H1 (cell line): ENCODE measurements at regions of chr10 and their contacts with region 1.

Region 1: GRCh38 chr10:63720072-63720537 is 198.9 kb downstream of the REEP3 start:
- DNase-seq: peak in 1 of 2 experiments; percentile 71
- H3K4me3 ChIP-seq: no peak overlapping the region
- H3K27ac ChIP-seq: no peak overlapping the region
- H3K4me1 ChIP-seq: peaks cover 0 to 11% (median 3%) of the 10 kb centered on the region in 4 experiments; a peak in 3 of 7 replicates
- H3K27me3 ChIP-seq: no peaks in the 10 kb centered on the region
- CTCF ChIP-seq: peak in 2 of 3 experiments; percentile 76 to 84; a peak in 3 of 4 replicates
- EP300 ChIP-seq: no peak
- POLR2A ChIP-seq: no peak
- RAD21 ChIP-seq: peak; percentile 92 to 95

Region 2: DNA sequence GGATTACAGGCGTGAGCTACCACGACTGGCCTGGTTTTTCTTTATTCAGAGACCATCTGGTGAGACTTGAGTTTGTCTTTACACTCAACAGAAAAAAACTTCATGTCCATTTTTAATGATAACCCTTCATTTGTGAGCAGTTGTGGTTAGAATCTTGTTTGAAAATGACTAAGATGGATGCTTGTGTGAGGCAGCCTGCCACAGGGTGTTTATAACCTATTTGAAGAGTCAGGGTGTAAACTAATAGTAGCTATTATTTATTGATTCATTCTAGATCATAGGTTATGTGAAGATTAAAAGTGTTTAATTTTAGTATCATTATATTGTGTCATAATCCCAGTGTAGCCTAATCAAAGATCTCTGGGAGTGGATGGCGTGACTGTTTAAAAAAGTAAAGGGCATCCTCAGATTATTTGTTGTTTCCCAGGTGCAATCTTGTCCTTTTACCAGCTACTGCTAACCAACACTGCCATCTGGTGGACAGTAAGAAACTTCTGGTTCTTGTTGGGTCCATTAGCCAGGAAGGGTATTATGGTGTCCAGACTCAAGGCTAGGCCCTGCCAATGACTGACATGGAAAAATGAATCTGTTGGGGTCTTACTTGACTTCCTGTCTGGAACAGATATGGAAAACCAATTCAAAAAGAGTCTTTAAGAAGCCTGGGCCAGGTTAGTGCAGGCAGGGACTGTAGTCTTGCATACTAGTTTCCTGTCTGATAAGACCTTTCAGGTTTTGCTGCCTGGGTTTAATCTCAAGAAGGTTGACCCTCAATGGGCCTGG is 562.1 kb before region 1 on chr10:
- CTCF ChIA-PET with region 1: interaction called, 32 read pairs
- POLR2A ChIA-PET with region 1: no interaction called
- DNase-seq: peak in 1 of 2 experiments; percentile 57
- H3K4me3 ChIP-seq: no peak overlapping the region
- H3K27ac ChIP-seq: no peak overlapping the region
- H3K4me1 ChIP-seq: peaks cover 0 to 4% (median 0%) of the 10 kb centered on the region in 4 experiments; a peak in 1 of 7 replicates
- H3K27me3 ChIP-seq: no peaks in the 10 kb centered on the region
- CTCF ChIP-seq: peak in 2 of 3 experiments; percentile 76 to 82; a peak in 3 of 4 replicates
- EP300 ChIP-seq: no peak
- POLR2A ChIP-seq: no peak
- RAD21 ChIP-seq: peak; percentile 96 to 97

Region 3: DNA sequence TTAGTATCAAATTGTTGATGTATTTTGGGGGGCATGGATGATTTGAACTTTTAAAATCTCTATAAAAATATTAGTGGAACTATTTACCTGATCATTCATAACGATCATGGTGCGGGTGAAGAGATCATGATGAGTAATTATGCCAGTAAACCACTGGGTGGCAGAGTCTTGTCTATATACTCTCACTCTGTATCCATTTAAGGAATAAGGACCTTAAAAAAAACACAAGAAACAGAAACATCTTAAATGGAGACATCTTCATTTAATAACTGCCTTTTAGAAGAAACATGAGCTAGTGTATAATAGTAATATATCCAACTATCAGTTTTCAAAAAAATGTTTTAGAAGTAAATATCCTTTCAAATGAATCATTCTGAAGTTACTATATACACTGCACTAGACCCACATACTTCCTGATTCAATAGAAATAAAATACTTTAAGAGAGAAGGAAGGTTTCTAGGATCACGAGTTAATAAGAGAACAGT is 502.9 kb before region 1 on chr10:
- CTCF ChIA-PET with region 1: interaction called, 22 read pairs
- POLR2A ChIA-PET with region 1: no interaction called
- DNase-seq: no peak
- H3K4me3 ChIP-seq: no peak overlapping the region
- H3K27ac ChIP-seq: no peak overlapping the region
- H3K4me1 ChIP-seq: peaks cover 0 to 6% (median 0%) of the 10 kb centered on the region in 4 experiments; a peak in 1 of 7 replicates
- H3K27me3 ChIP-seq: no peaks in the 10 kb centered on the region
- CTCF ChIP-seq: peak in 2 of 3 experiments; percentile 26 to 36; a peak in 2 of 4 replicates
- EP300 ChIP-seq: no peak
- POLR2A ChIP-seq: no peak
- RAD21 ChIP-seq: peak; percentile 54 to 63

Region 4: DNA sequence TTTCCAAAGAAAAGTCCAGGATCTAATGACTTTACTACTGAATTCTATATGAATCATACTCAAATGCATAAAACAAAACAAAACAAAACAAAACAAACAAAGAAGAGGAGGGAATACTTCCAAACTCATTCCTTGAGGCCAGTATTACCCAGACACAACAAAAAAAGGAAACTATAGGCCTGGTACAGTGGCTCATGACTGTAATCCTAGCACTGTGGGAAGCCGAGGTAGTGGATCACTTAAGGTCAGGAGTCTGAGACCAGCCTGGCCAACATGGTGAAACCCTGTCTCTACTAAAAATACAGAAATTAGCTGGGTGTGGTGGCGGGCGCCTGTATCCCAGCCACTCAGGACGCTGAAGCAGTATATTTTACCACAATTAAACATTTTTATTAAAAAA is 472.3 kb before region 1 on chr10:
- CTCF ChIA-PET with region 1: no interaction called
- POLR2A ChIA-PET with region 1: no interaction called
- DNase-seq: no peak
- H3K4me3 ChIP-seq: no peak overlapping the region
- H3K27ac ChIP-seq: no peak overlapping the region
- H3K4me1 ChIP-seq: peaks cover 0 to 5% (median 4%) of the 10 kb centered on the region in 4 experiments; a peak in 5 of 7 replicates
- H3K27me3 ChIP-seq: no peaks in the 10 kb centered on the region
- CTCF ChIP-seq: no peak
- EP300 ChIP-seq: no peak
- POLR2A ChIP-seq: no peak
- RAD21 ChIP-seq: no peak

Region 5: DNA sequence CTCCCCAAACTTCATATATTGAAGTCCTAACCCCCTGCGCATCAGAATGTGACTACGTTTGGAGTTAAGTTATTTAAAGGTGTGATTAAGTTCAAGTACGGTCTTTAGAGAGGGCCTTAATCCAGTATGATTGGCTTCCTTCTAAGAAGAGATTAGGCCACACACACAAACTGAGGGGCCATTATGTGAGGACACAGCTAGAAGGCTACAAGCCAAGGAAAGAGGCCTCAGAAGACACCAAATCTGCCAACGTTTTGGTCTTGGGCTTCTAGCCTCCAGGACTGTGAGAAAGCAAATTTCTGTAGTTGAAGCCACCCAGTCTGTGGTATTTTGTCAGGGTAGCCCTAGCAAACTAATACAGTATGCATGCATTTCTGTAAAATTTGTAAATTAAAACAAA is 157.2 kb before region 1 on chr10:
- CTCF ChIA-PET with region 1: no interaction called
- POLR2A ChIA-PET with region 1: no interaction called
- DNase-seq: no peak
- H3K4me3 ChIP-seq: no peak overlapping the region
- H3K27ac ChIP-seq: no peak overlapping the region
- H3K4me1 ChIP-seq: peaks cover 0 to 2% (median 0%) of the 10 kb centered on the region in 4 experiments; a peak in 1 of 7 replicates
- H3K27me3 ChIP-seq: no peaks in the 10 kb centered on the region
- CTCF ChIP-seq: no peak
- EP300 ChIP-seq: no peak
- POLR2A ChIP-seq: no peak
- RAD21 ChIP-seq: no peak

Region 6: DNA sequence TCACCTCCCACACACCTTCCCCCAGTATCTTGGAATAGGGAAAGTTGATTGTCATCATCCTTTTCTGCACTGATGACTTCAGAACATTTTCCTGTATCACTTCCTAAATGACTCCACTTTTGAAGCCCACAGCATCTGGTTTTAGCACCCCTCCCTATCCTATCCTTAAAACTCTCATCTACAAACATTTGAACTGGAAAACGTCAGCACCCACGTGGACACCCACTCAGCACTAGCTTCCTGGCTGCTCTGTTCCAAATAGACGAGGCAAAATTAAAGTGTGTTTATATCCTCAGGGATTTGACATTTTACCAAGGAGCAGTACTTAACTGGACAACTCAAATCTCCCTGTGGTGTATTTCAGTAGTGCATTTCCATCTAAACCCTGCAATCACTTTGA is 125.0 kb before region 1 on chr10:
- CTCF ChIA-PET with region 1: interaction called, 15 read pairs
- POLR2A ChIA-PET with region 1: no interaction called
- DNase-seq: no peak
- H3K4me3 ChIP-seq: no peak overlapping the region
- H3K27ac ChIP-seq: no peak overlapping the region
- H3K4me1 ChIP-seq: no peaks in the 10 kb centered on the region
- H3K27me3 ChIP-seq: no peaks in the 10 kb centered on the region
- CTCF ChIP-seq: no peak
- EP300 ChIP-seq: no peak
- POLR2A ChIP-seq: no peak
- RAD21 ChIP-seq: no peak

Region 7: DNA sequence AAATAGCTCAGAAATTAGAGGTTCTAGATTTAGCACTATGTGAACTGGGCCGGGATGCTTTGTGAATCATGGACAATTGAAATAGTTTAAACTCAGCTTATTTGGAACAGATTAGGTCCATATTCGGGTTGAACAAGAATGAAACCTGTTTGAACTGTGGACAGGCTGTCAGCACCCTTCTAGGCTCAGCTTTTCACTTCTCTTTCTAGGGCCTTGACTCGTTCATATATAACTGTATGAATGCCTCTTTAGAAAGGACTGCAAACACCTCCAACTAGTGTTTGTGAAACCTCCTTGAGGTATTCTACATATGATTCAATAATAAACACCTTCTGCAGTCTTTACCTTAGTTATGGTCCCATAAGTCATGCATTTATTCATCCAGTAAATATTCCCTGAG is 83.3 kb before region 1 on chr10:
- CTCF ChIA-PET with region 1: interaction called, 68 read pairs
- POLR2A ChIA-PET with region 1: no interaction called
- DNase-seq: no peak
- H3K4me3 ChIP-seq: no peak overlapping the region
- H3K27ac ChIP-seq: no peak overlapping the region
- H3K4me1 ChIP-seq: no peaks in the 10 kb centered on the region
- H3K27me3 ChIP-seq: no peaks in the 10 kb centered on the region
- CTCF ChIP-seq: no peak
- EP300 ChIP-seq: no peak
- POLR2A ChIP-seq: no peak
- RAD21 ChIP-seq: no peak

Region 8: GRCh38 chr10:63707254-63707910 is 12.7 kb before region 1 on chr10:
- CTCF ChIA-PET with region 1: interaction called, 31 read pairs
- POLR2A ChIA-PET with region 1: no interaction called
- DNase-seq: no peak
- H3K4me3 ChIP-seq: no peak overlapping the region
- H3K27ac ChIP-seq: no peak overlapping the region
- H3K4me1 ChIP-seq: peaks cover 6 to 13% (median 9%) of the 10 kb centered on the region in 4 experiments
- H3K27me3 ChIP-seq: no peaks in the 10 kb centered on the region
- CTCF ChIP-seq: no peak
- EP300 ChIP-seq: no peak
- POLR2A ChIP-seq: no peak
- RAD21 ChIP-seq: no peak

Region 9: GRCh38 chr10:63819753-63820329 is 99.7 kb after region 1 on chr10:
- CTCF ChIA-PET with region 1: interaction called, 13 read pairs
- POLR2A ChIA-PET with region 1: no interaction called
- DNase-seq: peak; percentile 17 to 75
- H3K4me3 ChIP-seq: no peak overlapping the region
- H3K27ac ChIP-seq: no peak overlapping the region
- H3K4me1 ChIP-seq: no peaks in the 10 kb centered on the region
- H3K27me3 ChIP-seq: no peaks in the 10 kb centered on the region
- CTCF ChIP-seq: peak in 2 of 3 experiments; percentile 64 to 70; a peak in 3 of 4 replicates
- EP300 ChIP-seq: no peak
- POLR2A ChIP-seq: no peak
- RAD21 ChIP-seq: peak; percentile 63 to 69